ENCODE measurements at regions of chr17 and their contacts with region 1.

Region 1: DNA sequence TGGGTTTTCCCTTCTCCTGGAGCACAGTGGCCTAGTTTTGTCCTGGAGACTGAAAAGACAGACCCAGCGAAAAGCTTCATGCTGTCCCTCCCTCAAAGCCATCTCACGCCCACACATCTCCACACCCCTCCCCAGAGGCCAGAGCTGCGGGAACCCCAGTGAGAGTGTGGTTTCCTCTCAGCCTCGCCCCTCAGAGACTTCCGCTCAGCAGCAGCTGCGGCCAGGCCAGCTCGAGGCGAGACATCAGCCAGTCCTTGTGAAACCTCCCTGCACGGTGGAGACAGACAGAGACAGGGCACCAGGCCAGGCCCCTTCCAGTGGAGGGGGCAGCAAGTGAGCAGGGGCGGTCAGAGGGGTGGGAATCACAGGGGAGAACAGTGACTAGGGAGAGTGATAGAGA is 77.0 kb upstream of the TNRC6C start:
- DNase-seq: peak; percentile 82
- H3K4me3 Mint-ChIP-seq: peak overlapping the region; percentile 64
- H3K27ac Mint-ChIP-seq: peak overlapping the region; percentile 95
- H3K4me1 Mint-ChIP-seq: peaks cover 53% of the 10 kb centered on the region
- H3K27me3 Mint-ChIP-seq: peaks cover 15% of the 10 kb centered on the region

Region 2: GRCh38 chr17:77783991-77784820 is 97.3 kb before region 1 on chr17:
- intact Hi-C with region 1: loop called (anchors 1 kb)
- DNase-seq: peak; percentile 71
- H3K4me3 Mint-ChIP-seq: peak overlapping the region; percentile 37
- H3K27ac Mint-ChIP-seq: peak overlapping the region; percentile 75
- H3K4me1 Mint-ChIP-seq: peaks cover 21% of the 10 kb centered on the region
- H3K27me3 Mint-ChIP-seq: peaks cover 26% of the 10 kb centered on the region

Region 3: GRCh38 chr17:77834170-77835115 is 47.1 kb before region 1 on chr17:
- intact Hi-C with region 1: loop called (anchors 2 kb)
- DNase-seq: peak; percentile 32
- H3K4me3 Mint-ChIP-seq: no peak overlapping the region
- H3K27ac Mint-ChIP-seq: no peak overlapping the region
- H3K4me1 Mint-ChIP-seq: peaks cover 26% of the 10 kb centered on the region
- H3K27me3 Mint-ChIP-seq: peaks cover 23% of the 10 kb centered on the region